Heart left ventricle (tissue), 16 donors: ENCODE measurements at regions of chrX and their contacts with region 1.

Region 1: DNA sequence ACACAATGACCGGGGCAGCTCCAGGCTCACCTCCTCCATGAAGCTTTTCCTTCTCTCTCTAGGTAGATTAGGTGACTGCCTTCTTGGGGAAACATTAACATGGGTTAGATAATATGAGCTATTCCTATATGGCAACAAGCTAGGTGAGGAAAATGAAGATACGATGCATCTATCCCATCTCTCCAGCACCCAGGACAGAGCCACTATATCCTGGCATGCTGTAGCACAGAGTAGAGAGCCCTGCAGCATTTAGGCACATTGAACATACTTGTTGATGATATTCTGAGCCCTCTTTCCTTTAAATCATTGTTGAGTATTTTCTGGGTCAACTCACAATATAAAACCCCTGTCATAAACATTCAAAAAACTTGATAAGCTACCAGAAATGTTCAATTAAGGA is 494.2 kb upstream of the MAGEB2 start:
- DNase-seq: no peak
- ATAC-seq: no peak
- H3K4me3 ChIP-seq: no peak overlapping the region
- H3K27ac ChIP-seq: no peak overlapping the region
- H3K4me1 ChIP-seq: no peaks in the 10 kb centered on the region
- H3K27me3 ChIP-seq: no peaks in the 10 kb centered on the region
- CTCF ChIP-seq: no peak
- POLR2A ChIP-seq: no peak

Region 2: DNA sequence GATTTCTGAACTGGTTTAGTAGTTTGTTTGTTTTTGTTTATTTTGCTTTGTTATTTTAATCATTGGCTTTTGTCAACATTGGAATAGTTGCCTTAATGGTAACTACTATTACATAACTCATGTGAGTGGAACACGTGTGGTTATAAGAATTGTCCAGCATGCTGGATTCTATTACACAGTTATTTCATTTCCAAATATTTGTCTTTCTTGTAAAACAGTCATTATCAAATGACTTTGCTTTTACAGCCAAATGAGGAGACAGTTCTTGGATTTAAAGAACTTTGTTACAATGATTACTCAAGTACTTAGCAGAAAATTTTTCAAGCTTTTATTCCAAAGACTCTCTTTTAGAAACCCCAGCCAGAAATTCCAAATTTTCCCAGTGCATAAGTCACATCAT is 21.9 kb before region 1 on chrX:
- intact Hi-C with region 1: loop called in 1 of 10 experiments (anchors 1 kb)
- DNase-seq: no peak
- ATAC-seq: no peak
- H3K4me3 ChIP-seq: no peak overlapping the region
- H3K27ac ChIP-seq: no peak overlapping the region
- H3K4me1 ChIP-seq: no peaks in the 10 kb centered on the region
- H3K27me3 ChIP-seq: no peaks in the 10 kb centered on the region
- CTCF ChIP-seq: no peak
- POLR2A ChIP-seq: no peak

Region 3: GRCh38 chrX:29762006-29762405 is 40.9 kb after region 1 on chrX:
- intact Hi-C with region 1: no loop called
- DNase-seq: no peak
- ATAC-seq: no peak
- H3K4me3 ChIP-seq: no peak overlapping the region
- H3K27ac ChIP-seq: no peak overlapping the region
- H3K4me1 ChIP-seq: no peaks in the 10 kb centered on the region
- H3K27me3 ChIP-seq: no peaks in the 10 kb centered on the region
- CTCF ChIP-seq: no peak
- POLR2A ChIP-seq: no peak

Region 4: GRCh38 chrX:31021537-31021936 is 1300.4 kb after region 1 on chrX:
- intact Hi-C with region 1: no loop called
- DNase-seq: peak in 3 of 5 donors; percentile 19 to 55 (median 24)
- ATAC-seq: peak in 2 of 4 donors; percentile 26 to 71
- H3K4me3 ChIP-seq: no peak overlapping the region
- H3K27ac ChIP-seq: no peak overlapping the region
- H3K4me1 ChIP-seq: no peaks in the 10 kb centered on the region
- H3K27me3 ChIP-seq: peaks cover 0 to 8% (median 0%) of the 10 kb centered on the region in 9 donors
- CTCF ChIP-seq: no peak
- POLR2A ChIP-seq: no peak